Naive thymus-derived CD4-positive, alpha-beta T cell (primary cell): ENCODE measurements at regions of chr7 and their contacts with region 1.

Region 1: GRCh38 chr7:106022193-106022821 is 59.2 kb downstream of the CDHR3 start:
- DNase-seq: peak; percentile 38 to 96 (median 93)
- ATAC-seq: peak; percentile 89
- H3K4me3 ChIP-seq: peak overlapping the region; percentile 23
- H3K4me3 Mint-ChIP-seq: peak overlapping the region; percentile 43 to 82 (median 68)
- H3K27ac ChIP-seq: peak overlapping the region; percentile 87
- H3K27ac Mint-ChIP-seq: peak overlapping the region; percentile 86 to 99 (median 98)
- H3K4me1 ChIP-seq: peaks cover 30 to 76% of the 10 kb centered on the region in 2 donors
- H3K4me1 Mint-ChIP-seq: peaks cover 23 to 89% (median 85%) of the 10 kb centered on the region in 7 donors
- H3K27me3 ChIP-seq: no peaks in the 10 kb centered on the region
- H3K27me3 Mint-ChIP-seq: peaks cover 0 to 15% (median 0%) of the 10 kb centered on the region in 5 donors

Region 2: DNA sequence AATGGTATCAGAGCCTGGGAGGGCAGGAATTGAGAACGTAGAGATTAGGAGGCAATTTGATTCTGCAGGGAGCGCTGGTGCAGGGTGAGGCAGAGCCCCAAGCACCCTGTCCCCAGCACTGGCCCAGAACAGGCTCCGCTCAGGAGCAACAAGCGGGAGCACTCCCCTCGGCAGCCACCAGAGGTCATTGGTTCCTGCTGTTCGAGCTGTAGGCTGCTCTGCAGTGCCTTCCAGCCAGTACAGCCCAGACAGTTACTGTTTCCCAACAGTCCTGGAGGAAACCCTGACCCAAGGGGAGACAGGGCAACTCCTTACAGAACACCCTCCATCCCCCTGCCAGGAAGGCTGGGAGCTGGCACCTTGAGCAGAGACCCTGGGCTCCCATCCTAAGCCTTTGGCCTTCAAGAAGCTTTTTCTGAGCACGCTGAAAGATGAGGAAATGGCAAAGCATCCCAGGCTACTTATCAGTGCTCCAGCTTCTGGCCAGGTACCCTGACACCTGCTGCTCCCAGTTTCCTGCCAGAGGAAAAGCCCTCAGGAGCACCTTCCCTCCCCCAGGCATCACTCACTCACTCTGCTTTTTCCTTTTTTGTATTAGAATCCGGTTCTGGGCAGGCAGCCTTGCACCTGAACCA is 369.8 kb before region 1 on chr7:
- CTCF ChIA-PET with region 1: interaction called, 6 read pairs
- POLR2A ChIA-PET with region 1: no interaction called
- intact Hi-C with region 1: loop called in 1 of 2 experiments (anchors 5 kb)
- DNase-seq: peak; percentile 34 to 68 (median 58)
- ATAC-seq: peak; percentile 82
- H3K4me3 ChIP-seq: no peak overlapping the region
- H3K4me3 Mint-ChIP-seq: no peak overlapping the region
- H3K27ac ChIP-seq: no peak overlapping the region
- H3K27ac Mint-ChIP-seq: peak overlapping the region in 2 of 9 donors; percentile 27 to 59
- H3K4me1 ChIP-seq: peaks cover 0 to 5% of the 10 kb centered on the region in 2 donors
- H3K4me1 Mint-ChIP-seq: peaks cover 9 to 24% (median 14%) of the 10 kb centered on the region in 7 donors
- H3K27me3 ChIP-seq: no peaks in the 10 kb centered on the region
- H3K27me3 Mint-ChIP-seq: no peaks in the 10 kb centered on the region

Region 3: DNA sequence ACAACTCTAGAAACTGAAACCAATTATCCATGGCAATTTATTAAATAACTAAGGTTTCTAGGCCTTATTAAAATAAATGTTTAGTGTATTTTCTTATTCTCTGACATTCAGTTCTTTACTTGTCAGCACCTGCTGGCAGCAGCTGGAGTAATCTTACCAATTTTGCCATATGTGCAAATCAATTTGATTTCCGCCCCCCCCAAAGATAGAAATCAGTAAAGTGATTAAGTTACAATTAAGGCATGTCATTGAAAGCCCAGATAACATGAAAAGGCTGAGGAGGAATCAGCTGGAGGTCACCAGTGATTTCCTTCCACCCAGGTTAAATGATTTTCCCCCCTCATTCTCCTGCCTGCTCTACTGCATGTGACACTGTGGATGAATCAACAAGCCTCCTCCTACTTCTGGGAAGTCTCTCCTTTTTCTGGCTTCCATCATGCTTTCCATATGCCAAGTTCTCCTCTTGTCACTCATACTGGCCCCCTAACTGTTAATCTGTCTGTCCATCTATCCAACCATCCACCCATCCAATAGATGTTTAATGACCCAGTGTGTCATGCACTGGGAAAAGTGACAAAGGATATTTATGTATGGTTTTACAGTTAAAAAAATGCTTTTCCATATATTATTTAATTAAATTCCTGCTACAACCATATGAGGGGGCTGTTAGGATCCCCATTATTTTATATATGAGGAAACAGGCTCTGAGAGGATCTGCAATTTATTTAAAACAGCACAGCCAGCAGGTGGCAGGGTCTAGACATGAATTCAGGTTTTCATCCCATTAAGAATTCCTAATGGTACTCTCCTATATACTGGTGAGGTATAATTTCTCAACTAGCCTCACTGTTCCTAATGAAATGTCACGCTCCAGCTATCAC is 262.4 kb before region 1 on chr7:
- CTCF ChIA-PET with region 1: interaction called, 16 read pairs
- POLR2A ChIA-PET with region 1: interaction called, 8 read pairs
- intact Hi-C with region 1: loop called in 1 of 2 experiments (anchors 1 kb)
- DNase-seq: peak in 2 of 9 donors; percentile 21 to 24
- ATAC-seq: peak; percentile 52
- H3K4me3 ChIP-seq: no peak overlapping the region
- H3K4me3 Mint-ChIP-seq: peak overlapping the region in 8 of 10 donors; percentile 1 to 82 (median 54)
- H3K27ac ChIP-seq: no peak overlapping the region
- H3K27ac Mint-ChIP-seq: peak overlapping the region in 8 of 9 donors; percentile 32 to 90 (median 76)
- H3K4me1 ChIP-seq: peaks cover 31 to 32% of the 10 kb centered on the region in 2 donors
- H3K4me1 Mint-ChIP-seq: peaks cover 22 to 53% (median 43%) of the 10 kb centered on the region in 7 donors
- H3K27me3 ChIP-seq: no peaks in the 10 kb centered on the region
- H3K27me3 Mint-ChIP-seq: peaks cover 0 to 11% (median 0%) of the 10 kb centered on the region in 5 donors

Region 4: DNA sequence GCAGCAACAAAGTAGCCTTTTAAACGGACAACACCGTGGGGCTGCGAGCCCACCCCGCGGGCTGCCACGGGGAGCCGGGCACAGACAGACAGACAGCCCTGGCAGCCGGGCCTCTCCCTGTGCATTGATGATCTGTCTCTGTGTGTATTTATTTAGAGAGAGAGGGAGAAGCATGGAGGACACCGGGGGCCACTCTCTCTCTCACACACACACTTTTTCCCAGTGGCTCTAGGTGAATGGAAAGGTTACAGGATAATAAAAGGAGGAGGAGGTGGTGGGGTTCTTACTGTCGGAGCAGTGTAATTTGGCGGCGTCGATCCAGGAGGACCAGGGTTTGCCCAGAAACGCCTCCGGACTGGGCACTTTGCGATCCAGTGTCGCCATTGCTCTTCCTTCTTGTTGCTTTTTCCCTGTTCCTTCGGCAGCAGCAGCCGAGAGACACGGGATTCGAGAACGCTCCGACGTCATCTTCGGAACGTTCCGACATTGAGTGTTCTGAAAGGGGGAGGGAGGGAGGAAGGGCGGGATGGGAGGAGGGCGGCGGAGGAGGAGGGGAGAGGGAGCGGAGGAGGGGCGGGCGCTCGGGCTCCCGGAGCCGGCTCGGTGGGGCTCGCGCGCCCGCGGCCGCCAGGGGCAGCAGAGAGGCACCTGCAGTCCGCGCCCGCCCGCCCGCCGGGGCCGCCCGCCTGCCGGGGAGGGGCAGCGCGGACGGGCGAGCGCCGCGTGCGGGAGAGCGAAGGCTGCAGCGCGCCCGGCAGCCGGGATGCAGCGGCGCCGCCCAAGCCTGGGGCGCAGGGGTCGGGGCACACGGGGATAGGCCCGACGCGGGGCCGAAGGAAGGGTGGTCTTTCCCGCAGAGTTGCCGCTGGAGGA is 146.0 kb before region 1 on chr7 and contains the start of gene ATXN7L1:
- CTCF ChIA-PET with region 1: interaction called, 5 read pairs
- POLR2A ChIA-PET with region 1: interaction called, 9 read pairs
- intact Hi-C with region 1: loop called (anchors 1 to 5 kb)
- DNase-seq: peak; percentile 75 to 94 (median 87)
- ATAC-seq: peak; percentile 99
- H3K4me3 ChIP-seq: peak within 1 kb of the TSS; percentile 97
- H3K4me3 Mint-ChIP-seq: peak within 1 kb of the TSS; percentile 90 to 100 (median 99)
- H3K27ac ChIP-seq: peak within 1 kb of the TSS; percentile 81
- H3K27ac Mint-ChIP-seq: peak within 1 kb of the TSS; percentile 85 to 99 (median 98)
- H3K4me1 ChIP-seq: peaks cover 10 to 33% of the 10 kb centered on the region in 2 donors
- H3K4me1 Mint-ChIP-seq: peaks cover 34 to 73% (median 52%) of the 10 kb centered on the region in 7 donors
- H3K27me3 ChIP-seq: no peaks in the 10 kb centered on the region
- H3K27me3 Mint-ChIP-seq: peaks cover 0 to 34% (median 0%) of the 10 kb centered on the region in 5 donors
- total RNA-seq, gene ATXN7L1: 18.5 to 52.4 (median 46.7) TPM

Region 5: DNA sequence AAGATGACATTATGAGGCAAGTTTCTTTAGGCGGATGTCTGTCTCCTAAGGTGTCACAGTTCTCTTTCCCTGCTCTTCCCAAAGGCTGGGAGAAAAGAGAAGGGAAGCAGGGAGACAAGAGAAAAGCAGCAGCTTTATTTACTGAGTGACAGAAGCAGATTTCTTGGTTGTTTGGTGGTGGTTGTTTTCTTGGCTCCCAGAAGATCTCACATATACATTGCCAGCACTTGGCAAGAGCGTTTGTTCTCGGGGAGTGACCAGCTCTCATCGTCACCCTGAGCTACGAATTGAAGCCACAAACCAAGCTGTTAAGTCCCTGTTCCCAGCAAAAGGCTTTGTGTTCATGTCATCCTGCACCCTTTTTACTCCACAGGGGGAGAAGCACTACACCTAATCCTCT is 47.8 kb before region 1 on chr7:
- CTCF ChIA-PET with region 1: no interaction called
- POLR2A ChIA-PET with region 1: no interaction called
- intact Hi-C with region 1: no loop called
- DNase-seq: no peak
- ATAC-seq: no peak
- H3K4me3 ChIP-seq: no peak overlapping the region
- H3K4me3 Mint-ChIP-seq: no peak overlapping the region
- H3K27ac ChIP-seq: no peak overlapping the region
- H3K27ac Mint-ChIP-seq: no peak overlapping the region
- H3K4me1 ChIP-seq: no peaks in the 10 kb centered on the region
- H3K4me1 Mint-ChIP-seq: peaks cover 0 to 5% (median 0%) of the 10 kb centered on the region in 7 donors
- H3K27me3 ChIP-seq: no peaks in the 10 kb centered on the region
- H3K27me3 Mint-ChIP-seq: peaks cover 0 to 16% (median 0%) of the 10 kb centered on the region in 5 donors

Region 6: GRCh38 chr7:105990726-105991453 is 31.4 kb before region 1 on chr7:
- CTCF ChIA-PET with region 1: no interaction called
- POLR2A ChIA-PET with region 1: no interaction called
- intact Hi-C with region 1: no loop called
- DNase-seq: no peak
- ATAC-seq: no peak
- H3K4me3 ChIP-seq: no peak overlapping the region
- H3K4me3 Mint-ChIP-seq: no peak overlapping the region
- H3K27ac ChIP-seq: no peak overlapping the region
- H3K27ac Mint-ChIP-seq: no peak overlapping the region
- H3K4me1 ChIP-seq: peaks cover 0 to 9% of the 10 kb centered on the region in 2 donors
- H3K4me1 Mint-ChIP-seq: peaks cover 3 to 29% (median 25%) of the 10 kb centered on the region in 7 donors
- H3K27me3 ChIP-seq: no peaks in the 10 kb centered on the region
- H3K27me3 Mint-ChIP-seq: peaks cover 0 to 52% (median 0%) of the 10 kb centered on the region in 5 donors

Region 7: GRCh38 chr7:106034383-106034782 is 12.1 kb after region 1 on chr7:
- CTCF ChIA-PET with region 1: interaction called, 85 read pairs
- POLR2A ChIA-PET with region 1: interaction called, 19 read pairs
- intact Hi-C with region 1: no loop called
- DNase-seq: no peak
- ATAC-seq: no peak
- H3K4me3 ChIP-seq: no peak overlapping the region
- H3K4me3 Mint-ChIP-seq: no peak overlapping the region
- H3K27ac ChIP-seq: no peak overlapping the region
- H3K27ac Mint-ChIP-seq: peak overlapping the region in 1 of 9 donors; percentile 17
- H3K4me1 ChIP-seq: peaks cover 0 to 18% of the 10 kb centered on the region in 2 donors
- H3K4me1 Mint-ChIP-seq: peaks cover 6 to 73% (median 38%) of the 10 kb centered on the region in 7 donors
- H3K27me3 ChIP-seq: no peaks in the 10 kb centered on the region
- H3K27me3 Mint-ChIP-seq: peaks cover 0 to 32% (median 0%) of the 10 kb centered on the region in 5 donors

Region 8: GRCh38 chr7:106346678-106347217 is 324.4 kb after region 1 on chr7:
- CTCF ChIA-PET with region 1: no interaction called
- POLR2A ChIA-PET with region 1: no interaction called
- intact Hi-C with region 1: loop called in 1 of 2 experiments (anchors 1 kb)
- DNase-seq: peak in 8 of 9 donors; percentile 28 to 61 (median 50)
- ATAC-seq: peak; percentile 78
- H3K4me3 ChIP-seq: no peak overlapping the region
- H3K4me3 Mint-ChIP-seq: peak overlapping the region in 1 of 10 donors; percentile 47
- H3K27ac ChIP-seq: no peak overlapping the region
- H3K27ac Mint-ChIP-seq: peak overlapping the region in 2 of 9 donors; percentile 19 to 94
- H3K4me1 ChIP-seq: peaks cover 6 to 19% of the 10 kb centered on the region in 2 donors
- H3K4me1 Mint-ChIP-seq: peaks cover 5 to 35% (median 13%) of the 10 kb centered on the region in 7 donors
- H3K27me3 ChIP-seq: no peaks in the 10 kb centered on the region
- H3K27me3 Mint-ChIP-seq: peaks cover 1 to 61% (median 31%) of the 10 kb centered on the region in 5 donors